ENCODE measurements at regions of chr2 and their contacts with region 1.

Region 1: GRCh38 chr2:183124222-183124956 is at the start of gene NUP35:
- DNase-seq: peak; percentile 95
- H3K4me3 Mint-ChIP-seq: peak within 1 kb of the TSS; percentile 84
- H3K27ac Mint-ChIP-seq: peak within 1 kb of the TSS; percentile 96
- H3K4me1 Mint-ChIP-seq: peaks cover 9% of the 10 kb centered on the region
- H3K27me3 Mint-ChIP-seq: no peaks in the 10 kb centered on the region
- CTCF ChIP-seq: no peak
- total RNA-seq, gene NUP35: 19.2 and 21.4 TPM in 2 replicates

Region 2: GRCh38 chr2:182715896-182716668 is 408.3 kb before region 1 on chr2 and contains the start of gene DNAJC10:
- CTCF ChIA-PET with region 1: no interaction called
- POLR2A ChIA-PET with region 1: interaction called, 14 read pairs
- intact Hi-C with region 1: no loop called
- DNase-seq: peak; percentile 85
- H3K4me3 Mint-ChIP-seq: no peak within 1 kb of the TSS
- H3K27ac Mint-ChIP-seq: no peak within 1 kb of the TSS
- H3K4me1 Mint-ChIP-seq: peaks cover 13% of the 10 kb centered on the region
- H3K27me3 Mint-ChIP-seq: no peaks in the 10 kb centered on the region
- CTCF ChIP-seq: no peak
- total RNA-seq, gene DNAJC10: 204 and 281 TPM in 2 replicates

Region 3: GRCh38 chr2:183031911-183032794 is 92.2 kb before region 1 on chr2:
- CTCF ChIA-PET with region 1: interaction called, 4 read pairs
- POLR2A ChIA-PET with region 1: interaction called, 26 read pairs
- intact Hi-C with region 1: no loop called
- DNase-seq: peak; percentile 75
- H3K4me3 Mint-ChIP-seq: peak overlapping the region; percentile 35
- H3K27ac Mint-ChIP-seq: peak overlapping the region; percentile 73
- H3K4me1 Mint-ChIP-seq: peaks cover 58% of the 10 kb centered on the region
- H3K27me3 Mint-ChIP-seq: no peaks in the 10 kb centered on the region
- CTCF ChIP-seq: no peak

Region 4: DNA sequence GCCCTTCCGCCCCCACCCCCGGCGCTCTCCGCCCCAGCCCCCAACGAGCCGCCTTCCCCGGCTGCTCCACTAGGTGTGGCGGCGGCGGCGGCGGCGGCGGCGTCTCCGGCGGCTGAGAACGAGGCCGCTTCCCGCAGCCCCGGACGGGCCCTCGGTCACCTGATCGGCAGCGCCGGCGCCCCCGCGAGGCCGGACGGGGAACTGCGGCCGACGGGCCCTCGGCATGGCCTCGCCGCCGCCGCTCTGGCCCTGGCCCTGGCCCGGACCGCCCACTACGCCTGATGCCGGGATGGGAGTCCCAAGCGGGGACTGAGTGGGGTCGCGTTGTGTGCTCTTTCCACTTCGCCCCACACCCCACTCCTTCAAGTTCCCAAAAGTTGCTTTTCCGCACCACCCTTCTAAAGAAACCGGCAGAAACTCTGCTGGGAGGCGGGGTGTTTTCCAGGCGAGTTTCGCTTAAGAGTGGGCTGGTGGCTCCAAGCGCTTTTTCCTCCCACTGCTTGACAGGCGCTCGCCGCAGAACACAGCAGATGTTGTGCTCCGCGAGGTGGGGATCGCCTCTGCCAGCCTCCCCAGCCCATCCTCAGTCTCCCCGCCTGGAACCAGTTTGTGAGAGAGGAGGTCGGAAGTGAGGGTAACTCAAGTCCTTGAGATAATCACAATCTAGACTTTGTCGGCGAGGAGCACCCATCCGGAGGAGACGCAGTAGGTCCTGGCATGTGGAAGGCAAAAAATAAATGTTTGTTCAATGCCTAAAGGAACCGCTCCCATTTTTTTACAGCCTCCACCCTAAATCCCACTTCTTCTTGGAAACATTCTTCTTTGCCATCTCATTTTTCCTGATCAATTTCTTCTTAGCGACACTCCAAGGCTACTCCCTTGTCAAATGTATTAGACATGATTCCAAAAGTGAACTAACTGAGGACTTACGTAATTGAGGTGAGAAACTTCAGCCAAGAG is 85.8 kb before region 1 on chr2 and contains the start of gene NCKAP1:
- CTCF ChIA-PET with region 1: interaction called, 4 read pairs
- POLR2A ChIA-PET with region 1: interaction called, 26 read pairs
- intact Hi-C with region 1: loop called (anchors 1 kb)
- DNase-seq: peak; percentile 88
- H3K4me3 Mint-ChIP-seq: peak within 1 kb of the TSS; percentile 96
- H3K27ac Mint-ChIP-seq: peak within 1 kb of the TSS; percentile 57
- H3K4me1 Mint-ChIP-seq: peaks cover 21% of the 10 kb centered on the region
- H3K27me3 Mint-ChIP-seq: no peaks in the 10 kb centered on the region
- CTCF ChIP-seq: peak; percentile 86
- total RNA-seq, gene NCKAP1: 160 and 187 TPM in 2 replicates

Region 5: GRCh38 chr2:183059561-183059960 is 64.8 kb before region 1 on chr2:
- CTCF ChIA-PET with region 1: no interaction called
- POLR2A ChIA-PET with region 1: interaction called, 21 read pairs
- intact Hi-C with region 1: no loop called
- DNase-seq: peak; percentile 83
- H3K4me3 Mint-ChIP-seq: peak overlapping the region; percentile 13
- H3K27ac Mint-ChIP-seq: peak overlapping the region; percentile 83
- H3K4me1 Mint-ChIP-seq: peaks cover 11% of the 10 kb centered on the region
- H3K27me3 Mint-ChIP-seq: no peaks in the 10 kb centered on the region
- CTCF ChIP-seq: no peak